ENCODE measurements at regions of chr1 and their contacts with region 1.

Region 1: DNA sequence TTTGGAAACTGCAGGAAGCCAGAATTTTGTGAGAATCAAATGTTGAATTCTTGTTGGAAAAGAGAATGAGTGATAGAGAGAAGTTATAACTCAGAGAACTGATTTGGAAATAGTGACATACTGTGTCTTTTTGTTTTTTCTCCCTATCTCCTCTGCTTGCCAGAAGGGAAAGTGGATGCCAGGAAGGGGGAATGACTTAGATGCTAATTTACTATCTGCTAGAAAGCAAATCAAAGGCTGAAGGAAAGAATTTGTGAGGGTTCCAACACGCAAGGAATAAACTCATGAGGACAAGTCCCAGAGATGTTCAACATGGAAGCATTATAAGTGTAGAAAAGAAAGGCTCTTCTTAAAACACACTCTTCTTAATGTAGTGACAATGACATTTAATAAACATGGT is 20.5 kb upstream of the LRRC39 start:
- DNase-seq: no peak
- H3K4me3 ChIP-seq: no peak overlapping the region
- H3K27ac ChIP-seq: no peak overlapping the region
- H3K4me1 ChIP-seq: no peaks in the 10 kb centered on the region
- H3K27me3 ChIP-seq: no peaks in the 10 kb centered on the region
- CTCF ChIP-seq: no peak

Region 2: GRCh38 chr1:99621340-99621901 is 577.2 kb before region 1 on chr1:
- CTCF ChIA-PET with region 1: interaction called, 12 read pairs
- POLR2A ChIA-PET with region 1: no interaction called
- intact Hi-C with region 1: no loop called
- DNase-seq: no peak
- H3K4me3 ChIP-seq: no peak overlapping the region
- H3K27ac ChIP-seq: no peak overlapping the region
- H3K4me1 ChIP-seq: no peaks in the 10 kb centered on the region
- H3K27me3 ChIP-seq: no peaks in the 10 kb centered on the region
- CTCF ChIP-seq: no peak

Measured in PC-9 (cell line).